ENCODE measurements at regions of chr3 and their contacts with region 1.

Region 1: DNA sequence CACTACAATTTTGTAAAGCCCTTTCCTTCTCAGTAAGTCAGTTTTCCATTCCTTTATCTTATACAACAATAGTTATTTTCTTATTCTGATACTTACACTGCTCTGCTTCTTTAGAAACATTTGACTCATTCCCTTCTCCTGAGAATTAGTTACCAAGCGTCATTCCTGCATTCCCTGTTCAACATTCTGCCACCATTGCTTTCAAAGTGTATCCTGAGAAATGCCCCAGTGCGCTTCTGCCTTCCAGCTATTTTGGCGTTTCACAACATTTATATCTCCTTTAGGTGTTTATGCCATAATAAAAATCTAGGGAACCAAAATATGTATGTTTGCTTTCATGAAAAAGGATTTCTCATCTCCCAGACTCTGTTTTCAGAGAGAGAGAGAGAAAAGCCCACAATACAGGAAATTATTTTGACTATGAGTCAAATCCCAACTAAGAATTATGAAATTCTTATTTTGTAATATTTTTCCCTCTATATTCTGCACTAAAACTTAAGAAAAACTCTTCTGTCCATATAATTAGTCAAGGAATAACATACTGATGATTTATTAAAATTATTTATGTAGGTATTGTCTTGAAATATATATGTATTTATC is 118.2 kb upstream of the RAP2B start:
- H3K4me3 Mint-ChIP-seq: peak overlapping the region; percentile 59
- H3K27ac Mint-ChIP-seq: peak overlapping the region; percentile 82
- H3K4me1 Mint-ChIP-seq: peaks cover 16% of the 10 kb centered on the region
- H3K27me3 Mint-ChIP-seq: no peaks in the 10 kb centered on the region

Region 2: GRCh38 chr3:152817400-152817799 is 226.4 kb before region 1 on chr3:
- intact Hi-C with region 1: no loop called
- H3K4me3 Mint-ChIP-seq: no peak overlapping the region
- H3K27ac Mint-ChIP-seq: no peak overlapping the region
- H3K4me1 Mint-ChIP-seq: no peaks in the 10 kb centered on the region
- H3K27me3 Mint-ChIP-seq: no peaks in the 10 kb centered on the region

Region 3: GRCh38 chr3:152969561-152970240 is 74.1 kb before region 1 on chr3:
- intact Hi-C with region 1: no loop called
- H3K4me3 Mint-ChIP-seq: no peak overlapping the region
- H3K27ac Mint-ChIP-seq: no peak overlapping the region
- H3K4me1 Mint-ChIP-seq: peaks cover 24% of the 10 kb centered on the region
- H3K27me3 Mint-ChIP-seq: no peaks in the 10 kb centered on the region

Region 4: GRCh38 chr3:153001210-153002078 is 42.4 kb before region 1 on chr3:
- intact Hi-C with region 1: no loop called
- H3K4me3 Mint-ChIP-seq: no peak overlapping the region
- H3K27ac Mint-ChIP-seq: no peak overlapping the region
- H3K4me1 Mint-ChIP-seq: peaks cover 8% of the 10 kb centered on the region
- H3K27me3 Mint-ChIP-seq: no peaks in the 10 kb centered on the region

Region 5: DNA sequence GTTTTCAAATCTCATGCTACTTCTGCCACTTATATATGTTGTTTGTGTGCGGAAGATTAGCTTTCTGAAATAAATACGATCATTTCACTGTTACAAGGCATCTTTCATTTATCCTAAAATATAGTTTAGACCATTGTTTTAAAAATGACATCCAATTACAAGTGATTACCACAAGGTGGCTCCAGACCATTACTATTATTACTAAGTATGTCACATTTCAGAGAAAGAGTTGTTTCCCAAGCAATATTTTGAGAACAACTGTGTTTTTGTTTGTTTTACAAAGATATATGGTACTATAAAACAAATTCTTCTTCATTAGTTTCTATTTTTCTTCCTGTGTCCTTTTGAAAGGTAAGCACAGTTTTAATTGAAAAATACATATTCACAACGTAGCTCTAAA is 17.8 kb before region 1 on chr3:
- intact Hi-C with region 1: no loop called
- H3K4me3 Mint-ChIP-seq: no peak overlapping the region
- H3K27ac Mint-ChIP-seq: no peak overlapping the region
- H3K4me1 Mint-ChIP-seq: peaks cover 32% of the 10 kb centered on the region
- H3K27me3 Mint-ChIP-seq: no peaks in the 10 kb centered on the region

Region 6: GRCh38 chr3:153291056-153291685 is 247.3 kb after region 1 on chr3:
- intact Hi-C with region 1: loop called (anchors 5 kb)
- H3K4me3 Mint-ChIP-seq: no peak overlapping the region
- H3K27ac Mint-ChIP-seq: peak overlapping the region; percentile 57
- H3K4me1 Mint-ChIP-seq: peaks cover 39% of the 10 kb centered on the region
- H3K27me3 Mint-ChIP-seq: no peaks in the 10 kb centered on the region

Region 7: GRCh38 chr3:153595186-153595815 is 551.5 kb after region 1 on chr3:
- intact Hi-C with region 1: loop called (anchors 5 kb)
- H3K4me3 Mint-ChIP-seq: no peak overlapping the region
- H3K27ac Mint-ChIP-seq: no peak overlapping the region
- H3K4me1 Mint-ChIP-seq: peaks cover 20% of the 10 kb centered on the region
- H3K27me3 Mint-ChIP-seq: peaks cover 2% of the 10 kb centered on the region

Region 8: GRCh38 chr3:153768561-153769469 is 725.0 kb after region 1 on chr3:
- intact Hi-C with region 1: loop called (anchors 5 kb)
- H3K4me3 Mint-ChIP-seq: no peak overlapping the region
- H3K27ac Mint-ChIP-seq: no peak overlapping the region
- H3K4me1 Mint-ChIP-seq: peaks cover 17% of the 10 kb centered on the region
- H3K27me3 Mint-ChIP-seq: peaks cover 7% of the 10 kb centered on the region

Measured in dendritic cell treated with granulocyte-macrophage colony-stimulating factor and Interleukin-4, amounts not matched to agents 40 ng/mL and 50 ng/mL, for 4 days (primary cell).